ENCODE measurements at regions of chr3 and their contacts with region 1.

Region 1: GRCh38 chr3:3126477-3127431 is at the start of gene TRNT1:
- H3K4me3 Mint-ChIP-seq: peak within 1 kb of the TSS; percentile 94
- H3K27ac Mint-ChIP-seq: peak within 1 kb of the TSS; percentile 97
- H3K4me1 Mint-ChIP-seq: peaks cover 30% of the 10 kb centered on the region
- H3K27me3 Mint-ChIP-seq: no peaks in the 10 kb centered on the region

Region 2: GRCh38 chr3:3053974-3054373 is 72.8 kb before region 1 on chr3:
- intact Hi-C with region 1: no loop called
- H3K4me3 Mint-ChIP-seq: no peak overlapping the region
- H3K27ac Mint-ChIP-seq: no peak overlapping the region
- H3K4me1 Mint-ChIP-seq: no peaks in the 10 kb centered on the region
- H3K27me3 Mint-ChIP-seq: no peaks in the 10 kb centered on the region

Region 3: DNA sequence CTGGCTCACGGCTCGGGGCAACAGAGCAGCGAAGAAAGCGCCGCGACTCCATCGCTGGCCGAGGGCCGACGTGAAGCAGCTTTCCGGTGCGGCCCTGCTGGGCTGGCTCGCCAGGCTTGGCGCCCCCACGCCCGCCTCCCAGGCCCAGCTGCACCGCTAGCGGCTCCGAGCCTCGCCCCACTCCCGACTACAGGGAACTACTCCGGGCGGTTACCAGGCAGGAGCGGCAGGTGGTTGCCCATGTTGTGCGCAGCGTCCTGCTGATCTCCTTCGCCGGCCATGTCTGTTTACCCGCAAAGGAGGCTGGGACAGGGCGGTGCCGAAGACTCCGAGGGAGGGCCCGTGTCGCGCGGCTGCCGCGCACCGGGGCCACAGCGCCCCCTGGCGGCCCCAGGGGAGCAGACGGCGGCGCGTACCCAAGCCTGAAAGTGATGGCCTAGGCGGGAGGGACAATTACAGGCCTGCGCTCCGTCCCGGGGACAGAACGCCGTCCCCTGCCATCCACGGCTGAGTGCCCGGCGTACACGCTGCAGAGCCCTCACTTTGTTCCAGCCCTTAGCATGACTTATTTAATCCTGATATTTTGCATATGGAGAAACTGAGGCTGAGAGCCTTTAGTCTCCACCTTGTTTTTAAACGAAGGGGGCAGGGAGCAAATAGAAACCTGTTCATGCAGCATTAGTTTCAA is 52.8 kb after region 1 on chr3 and contains the start of gene CRBN:
- intact Hi-C with region 1: loop called (anchors 2 kb)
- H3K4me3 Mint-ChIP-seq: peak within 1 kb of the TSS; percentile 83
- H3K27ac Mint-ChIP-seq: peak within 1 kb of the TSS; percentile 86
- H3K4me1 Mint-ChIP-seq: peaks cover 35% of the 10 kb centered on the region
- H3K27me3 Mint-ChIP-seq: peaks cover 2% of the 10 kb centered on the region

Region 4: DNA sequence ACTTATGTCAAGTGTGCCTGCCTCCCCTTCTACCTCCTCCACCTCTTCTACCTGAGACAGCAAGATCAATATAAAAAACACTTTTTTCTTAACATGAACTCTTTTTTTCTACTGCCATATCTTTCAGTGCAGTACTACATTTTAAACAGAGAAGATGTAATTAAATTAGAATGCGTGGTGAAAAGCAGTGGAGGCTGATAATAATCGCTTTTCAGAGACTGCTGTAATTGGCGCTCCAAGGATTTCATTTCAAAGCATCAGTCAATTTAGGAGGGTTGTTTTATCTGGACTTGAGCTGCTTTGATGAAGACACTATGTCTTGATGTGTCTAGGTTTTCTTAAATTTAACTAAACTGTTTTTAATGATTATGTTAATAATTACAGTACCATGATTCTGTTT is 138.0 kb after region 1 on chr3:
- intact Hi-C with region 1: no loop called
- H3K4me3 Mint-ChIP-seq: no peak overlapping the region
- H3K27ac Mint-ChIP-seq: no peak overlapping the region
- H3K4me1 Mint-ChIP-seq: no peaks in the 10 kb centered on the region
- H3K27me3 Mint-ChIP-seq: no peaks in the 10 kb centered on the region

Region 5: GRCh38 chr3:3366386-3366785 is 239.6 kb after region 1 on chr3:
- intact Hi-C with region 1: no loop called
- H3K4me3 Mint-ChIP-seq: no peak overlapping the region
- H3K27ac Mint-ChIP-seq: no peak overlapping the region
- H3K4me1 Mint-ChIP-seq: no peaks in the 10 kb centered on the region
- H3K27me3 Mint-ChIP-seq: no peaks in the 10 kb centered on the region

Region 6: DNA sequence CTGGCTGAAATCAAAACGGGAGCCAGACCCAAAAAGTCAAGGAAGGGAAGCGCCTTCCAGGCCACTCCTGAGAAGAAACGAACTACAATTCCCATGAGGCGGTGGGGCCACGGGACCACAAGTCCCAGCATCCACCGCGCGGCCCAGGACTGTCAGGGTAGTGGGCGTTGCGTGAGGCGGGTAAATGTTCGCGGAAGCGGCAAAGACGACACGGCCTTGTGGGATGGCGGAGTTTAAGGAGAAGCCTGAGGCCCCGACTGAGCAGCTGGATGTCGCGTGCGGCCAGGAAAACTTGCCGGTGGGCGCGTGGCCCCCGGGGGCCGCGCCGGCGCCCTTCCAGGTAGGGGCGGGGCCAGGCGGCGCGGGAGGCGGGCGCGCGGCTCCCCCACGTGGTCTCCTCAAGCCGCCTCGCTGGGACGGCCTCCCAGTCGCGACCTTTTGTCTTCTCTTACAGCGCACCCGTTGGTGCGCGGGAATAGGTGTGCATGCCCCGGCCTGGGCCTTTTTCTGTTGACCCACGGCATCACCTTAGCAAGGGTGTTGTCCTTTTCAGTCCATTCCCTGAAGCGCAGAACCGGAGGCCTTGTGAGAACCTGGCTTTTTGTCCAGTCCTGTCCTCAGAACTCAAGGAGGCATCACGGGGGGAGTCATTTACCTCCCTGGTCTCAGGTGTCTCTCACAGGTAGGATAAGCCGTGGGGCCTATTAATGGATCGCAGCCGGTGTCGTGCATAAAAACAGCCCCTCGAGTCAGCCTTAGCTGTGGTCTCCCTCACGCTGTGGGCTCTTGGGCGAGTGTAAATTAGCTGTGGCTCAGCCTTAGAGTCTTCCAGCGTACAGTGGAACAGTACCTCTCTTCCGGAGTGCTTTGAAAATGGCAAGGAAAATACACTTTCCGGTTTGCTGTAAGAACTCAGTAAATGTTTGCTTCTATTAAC is 1176.7 kb after region 1 on chr3 and contains the start of gene SETMAR:
- intact Hi-C with region 1: loop called (anchors 5 kb)
- H3K4me3 Mint-ChIP-seq: peak within 1 kb of the TSS; percentile 93
- H3K27ac Mint-ChIP-seq: peak within 1 kb of the TSS; percentile 94
- H3K4me1 Mint-ChIP-seq: peaks cover 29% of the 10 kb centered on the region
- H3K27me3 Mint-ChIP-seq: no peaks in the 10 kb centered on the region